HepG2 (cell line): ENCODE measurements at regions of chr1 and their contacts with region 1.

Region 1: GRCh38 chr1:40257688-40258444 is at the start of gene ZMPSTE24:
- DNase-seq: peak; percentile 95
- ATAC-seq: peak; percentile 98
- H3K4me3 ChIP-seq: peak within 1 kb of the TSS; percentile 92 to 99 (median 97)
- H3K27ac ChIP-seq: peak within 1 kb of the TSS; percentile 98
- H3K4me1 ChIP-seq: peaks cover 17% of the 10 kb centered on the region
- H3K27me3 ChIP-seq: no peaks in the 10 kb centered on the region; a peak in 1 of 5 replicates
- CTCF ChIP-seq: 0 out of 2 replicates have a peak, but pooled peaks have one; percentile 27
- EP300 ChIP-seq: peak in 1 of 2 experiments; percentile 52; a peak in 3 of 4 replicates
- POLR2A ChIP-seq: peak; percentile 74 to 81
- RAD21 ChIP-seq: peak; percentile 43
- total RNA-seq, gene ZMPSTE24: 43.1 and 60.2 TPM in 2 replicates

Region 2: GRCh38 chr1:40161125-40161887 is 96.6 kb before region 1 on chr1 and contains the start of gene RLF:
- CTCF ChIA-PET with region 1: no interaction called
- POLR2A ChIA-PET with region 1: no interaction called
- in situ Hi-C with region 1: no loop called
- intact Hi-C with region 1: loop called (anchors 5 kb)
- DNase-seq: peak; percentile 87
- ATAC-seq: peak; percentile 97
- H3K4me3 ChIP-seq: peak within 1 kb of the TSS; percentile 79 to 98 (median 83)
- H3K27ac ChIP-seq: peak within 1 kb of the TSS; percentile 93
- H3K4me1 ChIP-seq: peaks cover 32% of the 10 kb centered on the region
- H3K27me3 ChIP-seq: no peaks in the 10 kb centered on the region; a peak in 1 of 5 replicates
- CTCF ChIP-seq: no peak
- EP300 ChIP-seq: peak in 1 of 2 experiments; percentile 34; a peak in 1 of 4 replicates
- POLR2A ChIP-seq: peak; percentile 93 to 96
- RAD21 ChIP-seq: peak; percentile 36; the same call in 1 of the 2 replicates
- total RNA-seq, gene RLF: 15.7 and 27.2 TPM in 2 replicates

Region 3: GRCh38 chr1:40247655-40248054 is 10.2 kb before region 1 on chr1 and contains the start of gene TMCO2:
- CTCF ChIA-PET with region 1: no interaction called
- POLR2A ChIA-PET with region 1: interaction called, 13 read pairs
- in situ Hi-C with region 1: no loop called
- intact Hi-C with region 1: no loop called
- DNase-seq: peak; percentile 93
- ATAC-seq: peak; percentile 83
- H3K4me3 ChIP-seq: no peak within 1 kb of the TSS
- H3K27ac ChIP-seq: no peak within 1 kb of the TSS
- H3K4me1 ChIP-seq: peaks cover 58% of the 10 kb centered on the region
- H3K27me3 ChIP-seq: no peaks in the 10 kb centered on the region
- CTCF ChIP-seq: no peak
- EP300 ChIP-seq: no peak
- POLR2A ChIP-seq: 0 out of 4 replicates have a peak, but pooled peaks of 1 of the 2 experiments have one; percentile 19
- RAD21 ChIP-seq: no peak
- total RNA-seq, gene TMCO2: not detected in 2 replicates